ENCODE measurements at regions of chr10 and their contacts with region 1.

Region 1: DNA sequence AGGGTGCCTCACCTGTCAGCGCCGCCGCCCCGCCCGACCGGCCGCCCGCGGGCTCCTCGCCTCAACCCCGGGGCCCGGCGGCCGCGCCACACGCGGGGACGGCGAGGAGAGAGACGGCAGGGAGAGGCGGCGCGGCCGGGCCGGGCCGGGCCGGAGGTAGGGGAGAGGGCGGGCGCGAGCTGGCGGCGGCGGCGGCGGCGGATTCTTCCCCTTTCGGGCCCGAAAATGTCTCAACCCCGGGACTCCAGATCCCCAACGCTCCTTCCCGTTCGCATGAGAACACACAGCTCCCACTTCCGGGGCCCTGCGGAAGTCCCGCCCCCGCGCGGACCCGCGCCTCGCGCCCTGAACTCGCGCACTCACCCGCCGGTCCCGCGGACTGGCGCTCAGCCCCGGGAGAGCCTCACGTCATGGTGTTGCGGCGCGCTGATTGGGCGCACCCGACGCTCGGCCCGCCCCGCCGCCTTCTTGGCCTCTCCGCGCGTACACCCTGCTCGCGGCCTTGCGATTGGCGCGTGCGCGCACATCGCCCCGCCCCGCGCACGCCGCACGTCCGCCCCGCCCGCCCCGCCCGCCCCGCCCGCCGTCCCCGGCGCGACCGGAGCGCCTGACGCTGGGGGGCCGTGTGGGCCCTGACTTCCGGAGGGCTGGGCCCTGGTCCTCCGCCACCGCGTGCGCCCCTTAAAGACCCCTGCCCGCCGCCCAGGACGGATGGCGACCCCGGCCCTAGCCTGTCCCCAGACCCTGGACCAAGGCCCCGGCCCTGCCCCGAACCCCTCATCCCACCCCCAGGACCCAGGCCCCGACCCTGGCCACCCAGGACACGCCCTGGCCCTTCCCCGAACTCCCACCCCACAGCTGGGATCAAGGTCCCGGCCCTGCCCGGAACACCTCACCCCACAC is at the start of gene LARP4B:
- DNase-seq: peak; percentile 99
- ATAC-seq: peak; percentile 100
- total RNA-seq, gene LARP4B: 58.9 TPM

Region 2: DNA sequence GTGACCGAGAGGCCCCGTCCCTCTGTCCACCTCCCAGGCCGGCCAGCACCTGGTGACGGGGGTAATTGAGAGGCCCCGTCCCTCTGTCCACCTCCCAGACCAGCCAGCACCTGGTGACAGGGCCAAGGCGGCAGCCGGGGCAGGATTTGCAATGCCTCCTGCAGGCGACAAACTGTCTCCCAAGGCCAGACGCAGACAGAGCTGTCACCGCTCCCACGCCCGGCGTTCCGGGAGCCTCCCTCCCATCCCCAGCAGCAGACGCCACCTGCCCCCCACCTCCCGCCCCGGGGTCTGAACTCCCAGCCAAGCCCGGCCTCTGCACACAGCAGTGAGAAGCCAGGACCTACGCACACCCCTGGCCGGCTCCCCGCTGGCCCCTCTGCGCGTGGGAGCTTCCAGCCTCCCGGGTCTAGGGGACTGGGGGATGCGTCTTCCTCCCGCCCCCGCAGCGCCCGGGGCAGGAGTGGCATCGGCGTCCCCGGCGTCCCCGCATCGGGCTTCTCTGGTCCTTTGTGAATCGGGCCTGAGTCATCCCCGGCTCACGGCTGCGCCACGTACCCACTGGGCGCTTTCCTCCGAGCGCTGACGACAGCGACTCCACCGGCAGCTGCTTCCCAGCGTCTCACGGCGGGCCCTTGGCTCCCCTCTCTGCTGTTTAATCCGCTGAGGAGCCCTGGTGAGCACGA is 147.1 kb before region 1 on chr10:
- intact Hi-C with region 1: no loop called
- DNase-seq: peak; percentile 73
- ATAC-seq: peak; percentile 50

Region 3: GRCh38 chr10:870564-871166 is 61.0 kb before region 1 on chr10:
- intact Hi-C with region 1: loop called (anchors 1 kb)
- DNase-seq: no peak
- ATAC-seq: no peak

Region 4: GRCh38 chr10:1056326-1057105 is 124.8 kb after region 1 on chr10 and contains the start of gene WDR37:
- intact Hi-C with region 1: loop called (anchors 10 kb)
- DNase-seq: peak; percentile 94
- ATAC-seq: peak; percentile 97
- total RNA-seq, gene WDR37: 28.9 TPM

Region 5: DNA sequence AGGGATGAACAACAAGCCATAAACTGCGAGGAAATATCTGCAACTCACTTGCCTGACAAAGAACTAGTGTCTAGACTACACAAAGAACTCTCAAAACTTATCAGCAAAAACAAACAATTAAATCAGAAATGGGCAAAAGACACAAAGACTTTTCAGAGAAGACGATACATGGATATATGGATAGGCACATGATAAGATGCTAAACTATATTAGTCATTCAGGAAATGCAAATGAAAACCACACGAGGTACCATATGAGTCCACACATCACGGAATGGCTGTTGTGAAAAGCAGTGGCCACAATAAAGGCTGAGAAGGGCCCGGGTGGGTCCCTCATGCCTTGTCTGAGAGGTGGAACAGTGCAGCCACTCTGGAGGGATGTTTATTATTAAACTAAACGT is 392.3 kb after region 1 on chr10:
- intact Hi-C with region 1: no loop called
- DNase-seq: no peak
- ATAC-seq: no peak